CD8-positive, alpha-beta T cell (primary cell): ENCODE measurements at regions of chr10 and their contacts with region 1.

Region 1: DNA sequence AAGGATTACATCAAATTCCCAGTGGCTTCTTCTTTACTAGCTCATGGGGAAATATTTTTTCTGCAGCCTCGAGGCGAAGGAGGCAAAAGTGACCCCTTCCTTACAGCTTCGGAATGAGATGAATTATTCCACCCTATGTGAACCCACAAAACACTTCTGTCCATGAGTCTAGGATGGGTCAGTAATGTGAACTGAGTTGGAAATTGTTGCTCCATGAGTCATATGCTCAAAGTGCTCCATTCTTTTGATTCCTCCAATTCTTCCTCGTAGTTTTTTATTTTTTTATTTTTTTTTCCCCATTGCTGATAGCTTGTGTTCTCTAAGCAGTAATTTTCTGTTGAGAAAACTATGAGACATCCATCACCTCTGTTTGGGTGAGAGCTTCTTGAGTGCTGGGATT is 31.7 kb upstream of the FAM204A start:
- DNase-seq: no peak
- ATAC-seq: no peak
- H3K4me3 ChIP-seq: no peak overlapping the region
- H3K4me3 Mint-ChIP-seq: no peak overlapping the region
- H3K27ac ChIP-seq: no peak overlapping the region
- H3K27ac Mint-ChIP-seq: no peak overlapping the region
- H3K4me1 ChIP-seq: no peaks in the 10 kb centered on the region
- H3K4me1 Mint-ChIP-seq: no peaks in the 10 kb centered on the region
- H3K27me3 ChIP-seq: peaks cover 3% of the 10 kb centered on the region in 2 experiments
- H3K27me3 Mint-ChIP-seq: peaks cover 23% of the 10 kb centered on the region
- CTCF ChIP-seq: no peak

Region 2: GRCh38 chr10:118412932-118413331 is 39.1 kb after region 1 on chr10:
- CTCF ChIA-PET with region 1: no interaction called
- POLR2A ChIA-PET with region 1: no interaction called
- intact Hi-C with region 1: loop called in 1 of 2 experiments (anchors 1 kb)
- DNase-seq: no peak
- ATAC-seq: no peak
- H3K4me3 ChIP-seq: no peak overlapping the region
- H3K4me3 Mint-ChIP-seq: no peak overlapping the region
- H3K27ac ChIP-seq: no peak overlapping the region
- H3K27ac Mint-ChIP-seq: no peak overlapping the region
- H3K4me1 ChIP-seq: no peaks in the 10 kb centered on the region
- H3K4me1 Mint-ChIP-seq: no peaks in the 10 kb centered on the region
- H3K27me3 ChIP-seq: no peaks in the 10 kb centered on the region
- H3K27me3 Mint-ChIP-seq: peaks cover 25% of the 10 kb centered on the region
- CTCF ChIP-seq: no peak